Activated CD4-positive, alpha-beta T cell treated with anti-CD3 and anti-CD28 coated beads for 36 hours (primary cell): ENCODE measurements at regions of chr5 and their contacts with region 1.

Region 1: GRCh38 chr5:68548959-68549687 is 333.6 kb downstream of the PIK3R1 start:
- DNase-seq: no peak
- ATAC-seq: no peak
- H3K4me3 Mint-ChIP-seq: no peak overlapping the region
- H3K27ac Mint-ChIP-seq: no peak overlapping the region
- H3K4me1 Mint-ChIP-seq: no peaks in the 10 kb centered on the region
- H3K27me3 Mint-ChIP-seq: no peaks in the 10 kb centered on the region

Region 2: GRCh38 chr5:68562308-68562707 is 13.2 kb after region 1 on chr5:
- CTCF ChIA-PET with region 1: no interaction called
- POLR2A ChIA-PET with region 1: no interaction called
- intact Hi-C with region 1: loop called in 1 of 2 experiments (anchors 1 kb)
- DNase-seq: no peak
- ATAC-seq: no peak
- H3K4me3 Mint-ChIP-seq: no peak overlapping the region
- H3K27ac Mint-ChIP-seq: no peak overlapping the region
- H3K4me1 Mint-ChIP-seq: no peaks in the 10 kb centered on the region
- H3K27me3 Mint-ChIP-seq: peaks cover 7% of the 10 kb centered on the region